MCF 10A (cell line): ENCODE measurements at regions of chr16 and their contacts with region 1.

Region 1: DNA sequence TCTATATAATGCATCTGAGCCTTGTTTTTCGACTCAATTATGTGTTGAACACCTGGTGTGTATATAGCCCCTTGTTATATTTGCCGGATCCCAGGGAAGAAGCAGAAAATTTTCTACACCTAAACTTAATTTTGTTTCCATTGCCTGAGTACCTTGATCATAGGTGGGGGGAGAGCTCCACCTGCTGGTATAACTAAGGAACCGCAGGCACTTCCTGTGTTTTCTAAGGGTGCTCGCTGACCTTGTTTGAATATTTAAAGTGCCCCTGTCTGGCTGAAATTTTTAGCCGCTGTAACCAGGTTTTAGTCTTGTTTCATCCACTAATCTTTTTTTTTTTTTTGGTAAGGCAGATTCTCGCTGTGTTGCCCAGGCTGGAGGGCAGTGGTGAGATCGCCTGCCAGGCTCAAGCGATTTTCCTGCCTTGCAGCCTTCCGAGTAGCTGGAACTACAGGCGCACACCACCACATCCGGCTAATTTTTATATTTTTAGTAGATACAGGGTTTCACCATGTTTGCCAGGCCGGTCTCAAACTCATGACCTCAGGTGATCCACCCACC is 6.5 kb upstream of the NUBP1 start:
- DNase-seq: peak; percentile 80
- H3K4me3 Mint-ChIP-seq: no peak overlapping the region
- H3K27ac Mint-ChIP-seq: no peak overlapping the region
- H3K4me1 Mint-ChIP-seq: no peaks in the 10 kb centered on the region
- H3K27me3 Mint-ChIP-seq: no peaks in the 10 kb centered on the region
- CTCF ChIP-seq: peak; percentile 78

Region 2: DNA sequence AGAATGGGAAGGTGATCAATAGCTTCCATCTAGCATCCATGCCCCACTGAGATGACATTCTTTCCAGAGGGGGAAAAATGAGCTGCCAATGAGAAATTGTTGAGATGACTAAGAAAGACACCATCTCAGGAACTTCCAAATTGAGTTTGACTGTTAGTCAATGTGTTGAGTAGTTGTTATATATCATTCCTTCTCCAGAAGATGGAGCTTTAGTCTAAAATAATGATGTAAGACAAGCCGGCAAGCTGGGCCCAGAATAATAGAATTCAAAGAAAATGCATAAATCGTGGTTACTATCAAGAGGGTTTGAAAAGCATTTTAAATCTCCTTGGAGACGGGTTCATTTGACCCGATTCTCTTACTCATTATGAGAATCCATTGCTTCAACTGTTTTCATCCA is 422.3 kb before region 1 on chr16:
- CTCF ChIA-PET with region 1: interaction called, 10 read pairs
- POLR2A ChIA-PET with region 1: no interaction called
- intact Hi-C with region 1: loop called (anchors 5 kb)
- DNase-seq: peak; percentile 25
- H3K4me3 Mint-ChIP-seq: no peak overlapping the region
- H3K27ac Mint-ChIP-seq: no peak overlapping the region
- H3K4me1 Mint-ChIP-seq: no peaks in the 10 kb centered on the region
- H3K27me3 Mint-ChIP-seq: no peaks in the 10 kb centered on the region
- CTCF ChIP-seq: peak; percentile 35

Region 3: GRCh38 chr16:10521681-10522274 is 215.4 kb before region 1 on chr16:
- CTCF ChIA-PET with region 1: interaction called, 179 read pairs
- POLR2A ChIA-PET with region 1: no interaction called
- intact Hi-C with region 1: no loop called
- DNase-seq: peak; percentile 79
- H3K4me3 Mint-ChIP-seq: no peak overlapping the region
- H3K27ac Mint-ChIP-seq: no peak overlapping the region
- H3K4me1 Mint-ChIP-seq: no peaks in the 10 kb centered on the region
- H3K27me3 Mint-ChIP-seq: no peaks in the 10 kb centered on the region
- CTCF ChIP-seq: peak; percentile 56

Region 4: GRCh38 chr16:10579965-10580882 is 156.9 kb before region 1 on chr16 and contains the start of gene EMP2:
- CTCF ChIA-PET with region 1: interaction called, 4 read pairs
- POLR2A ChIA-PET with region 1: no interaction called
- intact Hi-C with region 1: loop called (anchors 2 kb)
- DNase-seq: peak; percentile 76
- H3K4me3 Mint-ChIP-seq: peak within 1 kb of the TSS; percentile 73
- H3K27ac Mint-ChIP-seq: no peak within 1 kb of the TSS
- H3K4me1 Mint-ChIP-seq: peaks cover 16% of the 10 kb centered on the region
- H3K27me3 Mint-ChIP-seq: peaks cover 8% of the 10 kb centered on the region
- CTCF ChIP-seq: peak; percentile 23
- total RNA-seq, gene EMP2: 1.7 and 4.8 TPM in 2 replicates

Region 5: GRCh38 chr16:10926094-10926493 is 188.9 kb after region 1 on chr16:
- CTCF ChIA-PET with region 1: interaction called, 11 read pairs
- POLR2A ChIA-PET with region 1: no interaction called
- intact Hi-C with region 1: no loop called
- DNase-seq: no peak
- H3K4me3 Mint-ChIP-seq: no peak overlapping the region
- H3K27ac Mint-ChIP-seq: no peak overlapping the region
- H3K4me1 Mint-ChIP-seq: no peaks in the 10 kb centered on the region
- H3K27me3 Mint-ChIP-seq: no peaks in the 10 kb centered on the region
- CTCF ChIP-seq: no peak

Region 6: DNA sequence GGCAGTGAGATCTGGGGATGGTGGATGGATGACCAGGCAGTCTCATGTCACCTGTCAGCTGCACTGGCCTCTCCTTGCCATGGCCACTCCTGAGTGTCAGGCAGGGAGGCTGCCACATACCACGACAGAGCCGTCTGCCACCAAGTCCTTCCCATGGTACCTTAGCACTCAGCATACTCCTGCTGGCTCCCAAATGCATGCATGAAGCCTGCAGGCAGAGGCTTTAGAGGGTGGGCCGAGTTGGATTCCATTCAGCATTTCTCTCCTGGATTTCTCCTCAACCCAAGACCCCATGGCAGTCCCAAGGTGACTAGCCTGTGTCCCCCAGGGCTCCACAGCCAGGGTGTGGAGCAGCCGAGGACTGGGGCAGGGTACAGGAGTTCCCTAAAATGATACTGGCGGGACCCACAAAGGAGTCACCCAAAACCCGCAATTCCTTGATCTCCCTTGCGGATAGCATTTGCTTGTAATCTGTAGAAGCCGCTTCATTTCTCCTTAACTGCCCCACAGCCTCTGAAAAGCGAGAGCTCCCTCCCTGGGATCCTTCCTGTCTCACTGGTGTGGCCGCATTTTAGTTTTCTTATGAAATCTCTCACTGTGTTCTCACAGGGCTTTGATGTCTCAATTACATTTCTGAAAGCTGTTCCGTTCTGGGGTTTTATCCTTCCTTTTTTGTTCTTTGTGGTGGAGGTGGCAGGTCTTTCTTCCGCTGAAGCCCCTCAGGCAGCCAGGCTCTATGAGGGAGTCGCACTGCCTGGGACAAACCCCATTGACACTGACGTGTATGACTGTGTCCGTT is 377.4 kb after region 1 on chr16:
- CTCF ChIA-PET with region 1: no interaction called
- POLR2A ChIA-PET with region 1: no interaction called
- intact Hi-C with region 1: no loop called
- DNase-seq: no peak
- H3K4me3 Mint-ChIP-seq: no peak overlapping the region
- H3K27ac Mint-ChIP-seq: no peak overlapping the region
- H3K4me1 Mint-ChIP-seq: peaks cover 11% of the 10 kb centered on the region
- H3K27me3 Mint-ChIP-seq: no peaks in the 10 kb centered on the region
- CTCF ChIP-seq: no peak